Dorsolateral prefrontal cortex (tissue), 120 donors: ENCODE measurements at regions of chr3 and their contacts with region 1.

Region 1: GRCh38 chr3:148075763-148076716 is 621.7 kb upstream of the AGTR1 start:
- DNase-seq: peak in 6 of 10 donors; percentile 15 to 62 (median 32)
- H3K4me3 ChIP-seq: peak overlapping the region in 11 of 59 donors; percentile 1 to 34 (median 9)
- H3K27ac ChIP-seq: peak overlapping the region in 51 of 59 donors; percentile 6 to 93 (median 60)
- H3K27me3 ChIP-seq: no peaks in the 10 kb centered on the region
- CTCF ChIP-seq: peak; percentile 58 to 95 (median 86)

Region 2: GRCh38 chr3:147119989-147120388 is 956.1 kb before region 1 on chr3:
- intact Hi-C with region 1: loop called in 1 of 2 experiments (anchors 10 kb)
- DNase-seq: no peak
- H3K4me3 ChIP-seq: no peak overlapping the region
- H3K27ac ChIP-seq: peak overlapping the region in 1 of 59 donors; percentile 49
- H3K27me3 ChIP-seq: peaks cover 0 to 4% (median 0%) of the 10 kb centered on the region in 45 donors
- CTCF ChIP-seq: peak in 53 of 56 donors; percentile 25 to 66 (median 50)

Region 3: DNA sequence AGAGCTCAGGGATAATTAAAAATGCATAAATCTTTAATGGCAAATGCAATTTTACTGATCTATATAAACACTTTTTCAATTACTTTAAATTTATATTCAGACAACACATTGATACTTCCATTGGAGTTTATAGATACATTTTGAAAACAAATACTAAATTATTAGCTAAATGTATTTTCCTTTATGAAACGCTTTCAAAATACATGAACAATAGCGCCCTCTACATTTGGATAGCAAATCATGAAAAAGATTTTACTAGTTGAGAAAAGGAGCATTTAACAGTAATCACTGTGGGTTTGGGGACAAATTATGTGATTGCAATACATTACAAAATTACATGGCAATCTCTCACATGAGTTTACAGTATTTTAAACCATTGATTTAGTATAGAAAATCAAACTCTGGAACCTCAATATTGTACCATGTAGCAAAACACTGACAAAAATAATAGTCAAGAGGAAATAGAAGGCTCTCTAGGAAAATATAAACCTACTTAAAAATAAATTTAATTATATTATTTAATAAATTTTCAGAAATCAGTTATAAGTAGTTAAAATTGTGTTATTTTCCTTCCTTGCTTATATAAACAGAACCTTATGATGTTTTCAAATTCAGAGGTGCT is 458.9 kb before region 1 on chr3:
- intact Hi-C with region 1: loop called in 1 of 2 experiments (anchors 5 kb)
- DNase-seq: no peak
- H3K4me3 ChIP-seq: peak overlapping the region in 2 of 59 donors; percentile 5 to 9
- H3K27ac ChIP-seq: peak overlapping the region in 7 of 59 donors; percentile 4 to 64 (median 9)
- H3K27me3 ChIP-seq: no peaks in the 10 kb centered on the region
- CTCF ChIP-seq: peak; percentile 39 to 85 (median 68)

Region 4: GRCh38 chr3:147945968-147946519 is 130.0 kb before region 1 on chr3:
- intact Hi-C with region 1: loop called (anchors 5 kb)
- DNase-seq: peak in 2 of 10 donors; percentile 38 to 53
- H3K4me3 ChIP-seq: peak overlapping the region; percentile 6 to 65 (median 45)
- H3K27ac ChIP-seq: peak overlapping the region in 58 of 59 donors; percentile 29 to 95 (median 78)
- H3K27me3 ChIP-seq: no peaks in the 10 kb centered on the region
- CTCF ChIP-seq: peak; percentile 19 to 77 (median 56)

Region 5: DNA sequence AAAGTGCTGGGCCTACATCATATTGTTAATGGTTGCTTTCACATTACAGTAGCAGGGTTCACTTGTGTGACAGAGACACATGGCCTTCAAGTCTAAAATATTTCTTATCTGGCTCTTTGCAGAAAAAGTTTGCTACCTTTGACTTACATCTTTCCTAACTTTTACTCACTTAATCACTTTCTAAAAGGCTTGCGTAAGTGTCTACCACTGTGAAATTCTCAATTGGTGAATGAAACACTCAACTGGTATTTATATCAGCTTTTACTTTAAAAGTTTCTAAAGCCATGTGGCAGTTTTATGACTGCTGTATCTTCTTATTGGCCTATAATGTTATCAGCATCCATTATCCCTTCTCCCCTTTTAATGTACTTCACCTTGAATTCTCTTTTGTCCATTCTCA is 112.3 kb before region 1 on chr3:
- intact Hi-C with region 1: no loop called
- DNase-seq: no peak
- H3K4me3 ChIP-seq: no peak overlapping the region
- H3K27ac ChIP-seq: no peak overlapping the region
- H3K27me3 ChIP-seq: no peaks in the 10 kb centered on the region
- CTCF ChIP-seq: no peak

Region 6: DNA sequence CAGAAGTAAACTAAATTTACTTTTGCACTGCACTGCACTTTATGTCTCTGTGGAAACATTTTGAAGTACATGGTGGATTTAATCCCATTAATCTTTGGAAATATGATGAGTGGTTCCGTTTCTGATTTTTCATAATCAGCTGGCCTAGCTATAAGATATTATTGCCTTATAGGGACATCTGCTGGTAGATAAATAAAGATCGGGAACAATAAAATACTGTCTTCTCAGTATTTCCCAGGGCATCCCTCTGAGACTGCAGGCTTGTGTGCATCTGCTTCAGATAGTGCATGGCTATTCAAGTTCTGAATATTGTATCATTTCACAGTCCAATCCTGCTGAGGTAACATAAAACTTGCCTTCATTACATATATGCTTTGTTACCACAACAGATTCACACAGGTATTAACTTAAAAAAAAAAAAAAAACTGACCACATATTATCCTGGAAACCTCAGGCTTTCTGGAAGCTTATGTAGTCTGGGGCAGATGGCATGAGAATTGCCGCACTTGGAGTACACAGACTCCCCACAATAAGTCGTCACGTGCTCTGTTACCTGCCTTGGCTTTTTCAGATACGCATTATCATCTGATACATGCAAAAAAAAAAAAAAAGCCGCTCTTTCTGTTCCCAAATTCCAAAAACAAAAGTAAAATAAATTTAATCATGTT is 290.8 kb after region 1 on chr3:
- intact Hi-C with region 1: loop called in 1 of 2 experiments (anchors 5 kb)
- DNase-seq: peak in 2 of 10 donors; percentile 25 to 30
- H3K4me3 ChIP-seq: no peak overlapping the region
- H3K27ac ChIP-seq: no peak overlapping the region
- H3K27me3 ChIP-seq: no peaks in the 10 kb centered on the region
- CTCF ChIP-seq: peak in 55 of 56 donors; percentile 23 to 74 (median 51)